ENCODE measurements at regions of chr6 and their contacts with region 1.

Region 1: DNA sequence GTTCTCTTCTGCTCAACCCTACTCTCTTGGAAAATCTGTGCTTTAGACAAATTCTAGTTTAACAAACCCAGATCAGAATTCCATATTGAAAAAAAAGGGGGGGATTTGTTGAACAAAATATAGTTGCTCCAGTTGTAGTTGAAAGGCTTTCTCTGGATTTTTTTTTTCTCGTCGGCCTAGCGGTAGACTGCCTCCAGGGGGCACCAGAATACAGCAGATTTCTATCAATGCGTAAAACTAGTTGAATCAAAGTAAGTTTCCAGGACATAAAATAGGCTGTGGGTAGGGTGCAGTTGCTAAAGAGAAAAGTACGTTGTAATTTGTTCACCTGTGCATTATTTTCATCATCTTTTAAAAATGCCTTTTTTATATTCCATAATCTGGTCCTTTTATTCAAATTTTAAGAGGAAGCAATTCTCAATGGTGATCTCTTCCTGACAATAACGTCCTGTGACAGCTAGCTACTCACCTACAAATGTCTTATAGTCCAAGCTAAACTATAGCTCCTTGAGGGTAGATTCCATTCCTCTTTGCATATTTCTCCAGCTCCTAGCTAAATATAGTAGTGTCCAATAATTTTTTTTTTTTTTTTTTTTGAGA is 105.4 kb downstream of the PERP start:
- DNase-seq: peak; percentile 65
- H3K4me3 Mint-ChIP-seq: no peak overlapping the region
- H3K27ac Mint-ChIP-seq: no peak overlapping the region
- H3K4me1 Mint-ChIP-seq: peaks cover 10% of the 10 kb centered on the region
- H3K27me3 Mint-ChIP-seq: no peaks in the 10 kb centered on the region
- CTCF ChIP-seq: peak; percentile 83

Region 2: GRCh38 chr6:137856138-137856898 is 145.5 kb before region 1 on chr6:
- CTCF ChIA-PET with region 1: no interaction called
- POLR2A ChIA-PET with region 1: no interaction called
- intact Hi-C with region 1: no loop called
- DNase-seq: no peak
- H3K4me3 Mint-ChIP-seq: no peak overlapping the region
- H3K27ac Mint-ChIP-seq: no peak overlapping the region
- H3K4me1 Mint-ChIP-seq: peaks cover 31% of the 10 kb centered on the region
- H3K27me3 Mint-ChIP-seq: no peaks in the 10 kb centered on the region
- CTCF ChIP-seq: no peak

Region 3: DNA sequence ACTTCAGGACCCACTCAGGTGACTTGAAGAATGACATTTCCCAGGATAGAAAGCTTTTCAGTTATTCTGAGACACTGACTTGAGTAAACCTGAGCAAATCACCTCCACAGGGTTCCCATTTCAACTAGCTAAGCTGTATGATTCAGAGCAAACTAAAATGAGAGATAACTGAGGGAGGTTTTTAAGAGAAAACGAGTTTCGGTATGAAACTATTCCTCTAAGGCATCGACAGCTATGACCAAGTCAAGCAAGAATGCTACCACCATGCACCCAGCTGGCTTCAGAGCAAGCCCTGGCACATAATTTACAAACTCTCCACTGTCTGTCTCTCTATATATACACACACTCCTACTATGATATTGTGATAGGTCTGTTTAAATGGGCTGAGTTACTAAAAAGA is 30.0 kb after region 1 on chr6:
- CTCF ChIA-PET with region 1: interaction called, 208 read pairs
- POLR2A ChIA-PET with region 1: interaction called, 247 read pairs
- intact Hi-C with region 1: no loop called
- DNase-seq: peak; percentile 62
- H3K4me3 Mint-ChIP-seq: peak overlapping the region; percentile 55
- H3K27ac Mint-ChIP-seq: peak overlapping the region; percentile 91
- H3K4me1 Mint-ChIP-seq: peaks cover 62% of the 10 kb centered on the region
- H3K27me3 Mint-ChIP-seq: no peaks in the 10 kb centered on the region
- CTCF ChIP-seq: no peak

Region 4: GRCh38 chr6:138161338-138162110 is 159.7 kb after region 1 on chr6 and contains the start of gene ARFGEF3:
- CTCF ChIA-PET with region 1: no interaction called
- POLR2A ChIA-PET with region 1: no interaction called
- intact Hi-C with region 1: no loop called
- DNase-seq: peak; percentile 68
- H3K4me3 Mint-ChIP-seq: peak within 1 kb of the TSS; percentile 68
- H3K27ac Mint-ChIP-seq: no peak within 1 kb of the TSS
- H3K4me1 Mint-ChIP-seq: no peaks in the 10 kb centered on the region
- H3K27me3 Mint-ChIP-seq: peaks cover 40% of the 10 kb centered on the region
- CTCF ChIP-seq: no peak
- total RNA-seq, gene ARFGEF3: 3.4 and 7.0 TPM in 2 replicates

Region 5: GRCh38 chr6:138410972-138411667 is 409.3 kb after region 1 on chr6:
- CTCF ChIA-PET with region 1: interaction called, 3 read pairs
- POLR2A ChIA-PET with region 1: interaction called, 3 read pairs
- intact Hi-C with region 1: loop called (anchors 10 kb)
- DNase-seq: peak; percentile 89
- H3K4me3 Mint-ChIP-seq: peak overlapping the region; percentile 7
- H3K27ac Mint-ChIP-seq: peak overlapping the region; percentile 29
- H3K4me1 Mint-ChIP-seq: peaks cover 37% of the 10 kb centered on the region
- H3K27me3 Mint-ChIP-seq: no peaks in the 10 kb centered on the region
- CTCF ChIP-seq: no peak

Measured in MCF 10A (cell line).